Activated T-helper 2 cell treated with anti-CD3 and anti-CD28 coated beads, Interferon-gamma antibody, Interleukin-2, Interleukin-4, amounts not matched to agents 10 μg/mL and 5 μg/mL and 100 μg/mL, durations not matched to agents 14 hours and 24 hours and 36 hours (primary cell): ENCODE measurements at regions of chr3 and their contacts with region 1.

Region 1: DNA sequence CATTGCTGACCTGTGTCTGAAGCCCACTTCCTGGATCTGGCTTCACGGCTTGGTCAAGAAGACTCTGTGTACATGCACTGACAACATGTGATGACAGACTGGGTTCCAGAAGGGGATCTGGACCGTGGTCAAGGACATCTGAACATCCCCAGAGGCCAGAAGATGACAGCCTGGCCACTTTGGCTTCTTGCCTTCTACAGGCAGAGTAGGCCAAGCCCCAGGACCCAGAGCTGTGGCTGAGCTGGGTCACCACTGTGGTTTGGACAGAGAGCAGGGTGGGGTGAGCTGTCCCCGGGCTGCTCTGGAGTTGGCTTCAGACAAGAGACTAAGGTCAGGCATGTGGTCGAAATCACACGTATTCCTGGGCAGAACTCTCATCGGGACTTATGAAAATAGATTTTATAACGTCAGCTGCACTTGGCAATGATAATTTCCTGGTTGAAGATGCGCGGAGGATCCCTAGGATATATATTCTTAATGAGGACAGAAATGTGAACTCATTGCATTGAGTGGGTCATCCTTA is 114.1 kb upstream of the FRMD4B start:
- DNase-seq: no peak
- H3K4me3 Mint-ChIP-seq: no peak overlapping the region
- H3K27ac Mint-ChIP-seq: no peak overlapping the region
- H3K4me1 Mint-ChIP-seq: no peaks in the 10 kb centered on the region
- H3K27me3 Mint-ChIP-seq: no peaks in the 10 kb centered on the region

Region 2: DNA sequence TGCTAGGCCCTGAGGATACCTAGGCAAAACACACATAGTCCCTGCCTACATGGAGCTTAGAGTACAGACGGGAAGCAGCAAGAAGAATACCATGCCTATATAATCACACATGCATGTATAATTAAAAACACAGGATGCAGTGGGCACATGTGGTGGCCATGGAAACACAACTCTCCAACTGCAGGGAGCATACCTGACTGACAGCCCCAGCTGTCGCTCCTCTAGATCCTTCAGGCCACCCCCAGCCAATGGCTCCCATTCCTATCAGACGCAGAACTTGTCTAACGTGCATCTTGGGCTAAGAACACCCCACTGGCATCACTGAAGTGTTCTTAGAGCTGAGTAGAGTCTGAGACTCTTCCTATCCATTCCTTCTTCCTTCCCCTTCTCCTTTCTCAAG is 11.4 kb after region 1 on chr3:
- intact Hi-C with region 1: no loop called
- DNase-seq: no peak
- H3K4me3 Mint-ChIP-seq: no peak overlapping the region
- H3K27ac Mint-ChIP-seq: no peak overlapping the region
- H3K4me1 Mint-ChIP-seq: no peaks in the 10 kb centered on the region
- H3K27me3 Mint-ChIP-seq: peaks cover 3% of the 10 kb centered on the region

Region 3: DNA sequence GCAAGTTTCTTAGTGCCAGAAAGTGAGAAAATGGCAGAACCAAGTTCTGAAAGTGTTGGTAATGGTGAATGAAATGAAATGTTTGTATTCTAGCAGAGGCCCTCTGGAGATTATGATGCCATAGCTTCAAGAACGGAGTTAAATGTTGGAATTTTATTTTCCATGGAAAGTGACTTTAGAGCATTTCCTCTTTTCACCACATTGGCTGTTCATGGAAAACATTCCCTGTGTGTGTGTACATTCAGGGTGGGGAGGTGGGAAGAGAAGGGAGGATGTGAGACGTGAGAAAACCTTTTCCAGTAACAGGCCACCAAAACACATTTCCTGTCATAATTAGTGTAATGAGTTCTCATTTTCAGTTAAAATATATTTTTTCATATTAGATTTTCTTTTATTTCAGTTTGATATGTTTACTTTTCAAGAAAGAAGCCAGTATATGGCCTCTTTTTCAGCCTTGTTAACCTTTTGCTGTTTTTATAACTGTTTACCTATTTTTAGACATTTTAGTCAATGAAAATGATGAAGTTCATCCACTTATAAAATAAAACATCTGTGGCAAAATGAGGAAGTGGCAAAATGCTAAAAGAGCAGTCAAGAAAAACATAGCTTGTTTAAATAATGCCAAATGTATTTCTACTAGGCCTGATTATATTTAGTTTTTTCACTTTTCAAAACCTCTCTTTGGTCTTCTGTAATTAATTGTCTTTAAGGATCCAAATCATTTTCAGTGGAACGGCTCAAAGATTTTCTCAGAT is 521.1 kb after region 1 on chr3:
- intact Hi-C with region 1: no loop called
- DNase-seq: no peak
- H3K4me3 Mint-ChIP-seq: no peak overlapping the region
- H3K27ac Mint-ChIP-seq: no peak overlapping the region
- H3K4me1 Mint-ChIP-seq: no peaks in the 10 kb centered on the region
- H3K27me3 Mint-ChIP-seq: no peaks in the 10 kb centered on the region

Region 4: GRCh38 chr3:70120357-70121121 is 620.6 kb after region 1 on chr3:
- intact Hi-C with region 1: loop called (anchors 5 kb)
- DNase-seq: peak; percentile 44
- H3K4me3 Mint-ChIP-seq: no peak overlapping the region
- H3K27ac Mint-ChIP-seq: no peak overlapping the region
- H3K4me1 Mint-ChIP-seq: no peaks in the 10 kb centered on the region
- H3K27me3 Mint-ChIP-seq: no peaks in the 10 kb centered on the region